ENCODE measurements at regions of chr12 and their contacts with region 1.

Region 1: GRCh38 chr12:122399592-122400373 is 22.7 kb downstream of the CLIP1 start:
- DNase-seq: peak; percentile 67
- ATAC-seq: peak; percentile 83
- H3K4me3 Mint-ChIP-seq: no peak overlapping the region
- H3K27ac Mint-ChIP-seq: peak overlapping the region; percentile 44
- H3K4me1 Mint-ChIP-seq: peaks cover 31% of the 10 kb centered on the region
- H3K27me3 Mint-ChIP-seq: no peaks in the 10 kb centered on the region

Region 2: GRCh38 chr12:122389697-122390096 is 10.1 kb before region 1 on chr12:
- CTCF ChIA-PET with region 1: interaction called, 10 read pairs
- POLR2A ChIA-PET with region 1: interaction called, 6 read pairs
- DNase-seq: no peak
- ATAC-seq: no peak
- H3K4me3 Mint-ChIP-seq: no peak overlapping the region
- H3K27ac Mint-ChIP-seq: no peak overlapping the region
- H3K4me1 Mint-ChIP-seq: peaks cover 4% of the 10 kb centered on the region
- H3K27me3 Mint-ChIP-seq: no peaks in the 10 kb centered on the region

Region 3: GRCh38 chr12:122421821-122422729 is 22.3 kb after region 1 on chr12 and contains the start of gene CLIP1:
- CTCF ChIA-PET with region 1: interaction called, 26 read pairs
- POLR2A ChIA-PET with region 1: interaction called, 5 read pairs
- DNase-seq: peak; percentile 64
- ATAC-seq: peak; percentile 88
- H3K4me3 Mint-ChIP-seq: peak within 1 kb of the TSS; percentile 88
- H3K27ac Mint-ChIP-seq: peak within 1 kb of the TSS; percentile 89
- H3K4me1 Mint-ChIP-seq: peaks cover 30% of the 10 kb centered on the region
- H3K27me3 Mint-ChIP-seq: peaks cover 3% of the 10 kb centered on the region
- total RNA-seq, gene CLIP1: 61.4 to 63.2 TPM

Region 4: GRCh38 chr12:122449353-122449752 is 49.6 kb after region 1 on chr12:
- CTCF ChIA-PET with region 1: interaction called, 20 read pairs
- POLR2A ChIA-PET with region 1: no interaction called
- DNase-seq: no peak
- ATAC-seq: no peak
- H3K4me3 Mint-ChIP-seq: no peak overlapping the region
- H3K27ac Mint-ChIP-seq: no peak overlapping the region
- H3K4me1 Mint-ChIP-seq: peaks cover 25% of the 10 kb centered on the region
- H3K27me3 Mint-ChIP-seq: peaks cover 2% of the 10 kb centered on the region

Region 5: DNA sequence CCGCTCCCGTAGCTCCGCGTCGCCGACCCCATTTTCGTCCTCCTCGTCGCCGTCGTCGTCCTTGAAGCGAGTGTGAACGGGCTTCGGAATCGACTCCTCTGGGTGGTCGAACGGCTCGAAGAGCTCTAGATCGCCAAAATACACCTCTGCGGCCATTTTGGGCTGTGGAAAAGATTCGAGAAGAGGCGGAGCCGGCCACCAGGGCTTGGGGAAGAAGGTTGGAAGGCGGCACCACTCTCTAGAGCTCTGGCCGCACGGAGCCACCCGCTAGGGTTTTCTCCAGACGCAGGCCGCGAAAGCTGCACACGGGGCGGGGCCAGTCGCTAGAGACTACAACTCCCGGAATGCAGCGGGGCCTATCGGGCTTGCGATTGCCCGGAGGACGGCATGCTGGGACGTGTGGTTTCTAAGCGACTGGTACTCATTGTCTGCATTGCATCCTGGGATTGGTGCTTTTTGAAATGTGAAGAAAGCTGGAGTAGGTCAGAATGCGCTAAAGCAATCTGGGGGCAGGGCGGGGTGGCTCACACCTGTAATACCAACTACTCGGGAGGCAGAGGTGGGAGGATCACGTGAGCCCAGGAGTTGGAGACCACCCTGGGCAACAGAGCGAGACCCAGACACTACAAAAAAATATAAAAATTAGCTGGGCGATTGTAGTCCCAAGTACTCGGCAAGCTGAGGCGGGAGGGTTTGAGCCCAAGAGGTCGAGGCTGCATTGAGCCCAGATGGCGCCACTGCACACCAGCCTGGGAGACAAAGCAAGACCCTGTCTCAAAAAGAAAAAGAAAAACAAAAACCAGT is 101.1 kb after region 1 on chr12 and contains the start of gene ZCCHC8:
- CTCF ChIA-PET with region 1: interaction called, 42 read pairs
- POLR2A ChIA-PET with region 1: interaction called, 8 read pairs
- DNase-seq: peak; percentile 99
- ATAC-seq: peak; percentile 95
- H3K4me3 Mint-ChIP-seq: peak within 1 kb of the TSS; percentile 99
- H3K27ac Mint-ChIP-seq: peak within 1 kb of the TSS; percentile 99
- H3K4me1 Mint-ChIP-seq: peaks cover 34% of the 10 kb centered on the region
- H3K27me3 Mint-ChIP-seq: no peaks in the 10 kb centered on the region
- total RNA-seq, gene ZCCHC8: 41.3 to 45.3 TPM

Region 6: GRCh38 chr12:122563361-122563760 is 163.6 kb after region 1 on chr12:
- CTCF ChIA-PET with region 1: no interaction called
- POLR2A ChIA-PET with region 1: no interaction called
- DNase-seq: no peak
- ATAC-seq: no peak
- H3K4me3 Mint-ChIP-seq: no peak overlapping the region
- H3K27ac Mint-ChIP-seq: no peak overlapping the region
- H3K4me1 Mint-ChIP-seq: no peaks in the 10 kb centered on the region
- H3K27me3 Mint-ChIP-seq: no peaks in the 10 kb centered on the region